Spleen (tissue), 13 donors: ENCODE measurements at regions of chr15 and their contacts with region 1.

Region 1: GRCh38 chr15:57146506-57147201 is 228.2 kb downstream of the TCF12 start:
- DNase-seq: no peak
- H3K4me3 ChIP-seq: peak overlapping the region in 1 of 8 donors; percentile 27
- H3K27ac ChIP-seq: no peak overlapping the region
- H3K4me1 ChIP-seq: peaks cover 0 to 44% (median 25%) of the 10 kb centered on the region in 6 donors
- H3K27me3 ChIP-seq: no peaks in the 10 kb centered on the region
- CTCF ChIP-seq: peak; percentile 30 to 68 (median 61)
- POLR2A ChIP-seq: no peak

Region 2: DNA sequence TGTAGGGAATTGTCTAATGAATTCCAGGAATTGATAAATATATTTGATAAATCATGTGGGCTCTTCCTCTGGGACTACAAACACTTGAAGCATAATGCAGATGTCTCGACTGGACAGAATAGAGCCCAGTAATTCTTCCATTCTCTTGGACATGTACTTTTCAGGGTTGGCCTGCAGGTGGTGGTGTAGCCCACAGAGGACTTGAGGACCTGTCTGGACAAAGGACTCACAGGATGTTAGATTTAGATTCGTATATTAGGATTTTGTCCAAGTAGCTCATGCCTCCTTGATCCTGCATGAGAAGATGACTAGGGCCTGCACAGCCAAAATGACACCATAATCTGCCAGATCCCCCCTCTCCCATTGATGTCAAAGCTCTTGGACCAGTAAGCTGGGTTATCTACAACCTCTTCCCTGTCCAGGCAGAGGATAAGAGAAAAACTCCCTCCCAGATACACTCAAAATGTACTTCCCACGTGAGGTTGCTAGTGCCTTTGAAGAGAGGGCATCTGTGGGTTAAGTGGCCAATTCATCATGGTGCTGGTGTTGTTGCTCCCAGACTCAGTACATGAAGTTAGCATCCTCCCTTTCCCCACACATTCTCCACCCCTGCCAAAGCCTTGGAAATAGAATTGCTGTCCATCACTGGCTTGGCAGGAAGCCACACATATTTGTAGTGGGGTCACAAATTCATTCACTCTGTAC is 324.8 kb before region 1 on chr15:
- intact Hi-C with region 1: loop called (anchors 10 kb)
- DNase-seq: peak; percentile 78
- H3K4me3 ChIP-seq: no peak overlapping the region
- H3K27ac ChIP-seq: no peak overlapping the region
- H3K4me1 ChIP-seq: peaks cover 0 to 7% (median 2%) of the 10 kb centered on the region in 6 donors
- H3K27me3 ChIP-seq: no peaks in the 10 kb centered on the region
- CTCF ChIP-seq: peak in 10 of 11 experiments; percentile 18 to 79 (median 64)
- POLR2A ChIP-seq: no peak

Region 3: DNA sequence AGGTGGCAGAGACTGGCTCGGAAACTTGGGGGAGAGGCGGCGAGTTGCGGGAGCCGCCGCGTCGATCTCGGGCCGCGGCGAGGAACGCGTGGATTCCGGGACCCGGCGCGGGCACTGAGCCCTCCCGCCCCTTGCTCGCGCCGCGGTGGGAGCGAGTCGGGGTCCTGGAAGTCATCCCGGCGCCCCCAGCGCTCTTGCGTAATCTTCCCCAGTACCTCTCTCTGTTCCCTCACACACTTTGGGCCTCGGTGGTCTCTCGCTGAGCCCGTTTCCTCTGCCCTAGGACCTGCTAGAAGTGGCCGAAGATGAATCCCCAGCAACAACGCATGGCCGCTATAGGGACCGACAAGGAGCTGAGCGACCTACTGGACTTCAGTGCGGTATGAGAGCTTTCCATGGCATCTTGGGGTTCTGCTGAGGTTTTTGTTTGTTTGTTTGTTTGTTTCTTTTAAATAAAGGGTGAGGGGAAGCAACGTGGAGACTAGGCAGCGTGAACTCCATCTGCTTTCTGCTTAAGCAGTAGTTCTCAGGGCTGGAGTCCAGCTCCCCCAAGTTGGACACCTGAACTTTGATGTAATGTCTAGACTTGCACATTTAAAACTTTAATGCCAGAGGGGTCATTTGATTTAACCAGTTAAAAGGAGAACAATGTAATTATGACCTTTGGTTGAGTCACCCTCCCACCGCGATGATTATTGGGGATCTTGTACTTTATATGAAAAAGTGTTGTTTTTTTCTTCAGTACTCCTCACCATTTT is 226.9 kb before region 1 on chr15:
- intact Hi-C with region 1: loop called (anchors 10 kb)
- DNase-seq: no peak
- H3K4me3 ChIP-seq: peak overlapping the region; percentile 61 to 96 (median 92)
- H3K27ac ChIP-seq: peak overlapping the region; percentile 91 to 97 (median 94)
- H3K4me1 ChIP-seq: peaks cover 18 to 73% (median 60%) of the 10 kb centered on the region in 6 donors
- H3K27me3 ChIP-seq: no peaks in the 10 kb centered on the region
- CTCF ChIP-seq: no peak
- POLR2A ChIP-seq: no peak

Region 4: GRCh38 chr15:57306161-57306943 is 159.7 kb after region 1 on chr15:
- intact Hi-C with region 1: loop called (anchors 5 kb)
- DNase-seq: peak; percentile 96
- H3K4me3 ChIP-seq: peak overlapping the region; percentile 33 to 70 (median 44)
- H3K27ac ChIP-seq: peak overlapping the region in 4 of 8 donors; percentile 9 to 67 (median 50)
- H3K4me1 ChIP-seq: peaks cover 7 to 50% (median 17%) of the 10 kb centered on the region in 6 donors
- H3K27me3 ChIP-seq: peaks cover 0 to 6% (median 0%) of the 10 kb centered on the region in 7 donors
- CTCF ChIP-seq: peak; percentile 50 to 93 (median 84)
- POLR2A ChIP-seq: no peak